A673 (cell line): ENCODE measurements at regions of chr12 and their contacts with region 1.

Region 1: DNA sequence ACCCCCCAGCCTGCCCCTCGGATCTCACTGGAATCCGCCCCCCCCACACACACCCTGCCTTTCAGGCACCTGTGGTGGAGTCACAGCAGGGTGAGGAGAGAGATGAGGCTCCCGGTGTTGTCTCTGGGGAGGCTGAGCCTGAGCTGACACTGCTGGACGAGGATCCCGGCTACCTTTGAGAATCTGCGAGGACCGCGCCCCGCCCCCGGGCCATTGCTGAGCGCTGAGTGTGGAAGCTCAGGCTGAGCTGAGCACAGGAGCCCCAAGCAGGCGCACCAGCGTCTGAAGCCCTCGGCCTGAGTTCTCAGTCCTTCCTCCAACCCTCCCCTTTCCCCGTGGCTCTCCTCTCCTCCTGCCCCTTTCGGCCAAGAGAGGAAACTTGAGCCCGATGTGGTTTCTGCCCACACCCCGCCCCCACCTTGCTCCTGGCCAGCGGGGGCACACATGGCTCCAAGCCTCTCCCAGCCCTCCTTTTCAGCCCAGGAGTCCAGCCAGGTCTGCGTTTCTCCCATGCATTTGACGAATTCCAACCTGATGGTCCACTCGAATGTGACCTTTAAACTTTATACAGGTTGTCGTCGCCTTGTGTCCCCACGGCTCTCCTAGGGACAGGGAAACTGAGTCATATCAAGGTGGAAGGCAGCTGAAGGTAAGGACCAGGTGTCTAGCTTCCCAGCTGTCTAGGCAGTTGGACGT is at the start of gene NFE2:
- DNase-seq: no peak
- H3K4me3 ChIP-seq: no peak within 1 kb of the TSS
- H3K27ac ChIP-seq: no peak within 1 kb of the TSS
- H3K4me1 ChIP-seq: no peaks in the 10 kb centered on the region
- H3K27me3 ChIP-seq: peaks cover 6% of the 10 kb centered on the region
- CTCF ChIP-seq: no peak
- total RNA-seq, gene NFE2: not detected in 2 replicates

Region 2: DNA sequence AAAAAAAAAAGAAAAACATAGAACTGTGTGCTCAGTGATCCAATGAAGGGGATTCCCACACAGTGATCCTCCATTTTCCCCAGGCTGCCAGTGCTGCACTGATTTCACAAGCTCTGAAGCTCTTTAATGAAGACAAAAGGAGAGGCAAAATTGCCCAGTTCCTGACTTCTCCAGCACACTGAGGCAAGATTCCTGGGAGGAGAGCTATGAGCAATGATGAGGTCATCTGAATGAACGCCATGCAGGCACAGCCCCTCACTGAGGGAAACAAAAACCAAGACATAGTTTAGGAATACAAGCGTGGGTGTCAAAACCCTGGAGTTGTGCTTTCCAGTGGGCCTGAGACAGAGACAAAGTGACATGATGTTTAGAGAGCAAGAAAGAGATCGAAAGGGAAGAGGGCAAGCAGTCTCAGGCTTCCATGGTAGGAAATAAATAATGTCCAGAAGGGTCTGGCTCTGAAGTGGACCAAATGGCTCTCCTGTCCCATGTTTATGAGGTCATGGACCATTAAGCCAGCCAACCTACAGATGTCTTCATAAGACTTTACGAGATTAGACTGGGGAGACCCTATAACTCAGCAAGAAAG is 71.2 kb before region 1 on chr12:
- CTCF ChIA-PET with region 1: interaction called, 7 read pairs
- POLR2A ChIA-PET with region 1: interaction called, 11 read pairs
- intact Hi-C with region 1: no loop called
- DNase-seq: peak; percentile 80
- H3K4me3 ChIP-seq: no peak overlapping the region
- H3K27ac ChIP-seq: peak overlapping the region; percentile 15
- H3K4me1 ChIP-seq: peaks cover 4% of the 10 kb centered on the region
- H3K27me3 ChIP-seq: no peaks in the 10 kb centered on the region
- CTCF ChIP-seq: no peak

Region 3: DNA sequence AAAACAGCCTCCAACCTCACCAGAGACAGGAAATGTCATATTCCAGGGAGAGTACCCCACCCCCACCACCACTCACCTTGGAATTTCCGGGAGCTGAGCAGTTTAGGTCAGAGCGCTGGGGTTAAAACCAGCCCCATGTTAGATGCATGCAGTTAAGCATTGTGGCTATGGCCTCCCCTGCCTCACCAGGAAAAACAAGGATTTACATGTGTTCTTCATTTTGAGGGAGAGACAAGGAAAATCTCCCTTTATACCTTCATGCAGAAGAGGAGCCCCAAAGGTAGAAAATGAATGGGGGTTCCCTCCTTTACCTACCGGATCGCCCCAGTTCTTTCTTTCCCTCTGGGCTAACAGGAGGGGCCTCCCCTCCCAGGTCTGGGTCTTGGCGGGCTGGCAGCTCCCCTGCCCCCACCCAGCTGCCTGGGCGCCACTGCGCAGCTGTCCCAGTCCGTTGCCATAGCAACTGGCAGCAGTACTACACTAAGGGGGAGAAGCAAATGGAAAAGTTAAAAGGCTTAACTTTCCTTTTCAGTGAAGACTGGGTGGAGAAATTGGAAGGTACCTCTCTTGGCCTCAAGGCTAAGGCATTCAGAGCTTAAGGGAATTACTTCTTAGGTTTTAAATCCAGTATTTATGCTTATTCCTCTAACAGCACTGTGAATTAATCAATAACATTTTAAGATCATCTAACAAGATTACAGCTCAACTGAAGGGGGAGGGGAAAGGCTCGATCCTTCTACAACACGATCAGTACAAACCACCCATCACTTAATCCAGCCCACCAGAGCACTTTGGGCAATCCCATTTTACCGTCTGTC is 41.5 kb before region 1 on chr12:
- CTCF ChIA-PET with region 1: no interaction called
- POLR2A ChIA-PET with region 1: interaction called, 25 read pairs
- intact Hi-C with region 1: no loop called
- DNase-seq: peak; percentile 97
- H3K4me3 ChIP-seq: peak overlapping the region; percentile 50
- H3K27ac ChIP-seq: peak overlapping the region; percentile 87
- H3K4me1 ChIP-seq: peaks cover 59% of the 10 kb centered on the region
- H3K27me3 ChIP-seq: no peaks in the 10 kb centered on the region
- CTCF ChIP-seq: no peak

Region 4: DNA sequence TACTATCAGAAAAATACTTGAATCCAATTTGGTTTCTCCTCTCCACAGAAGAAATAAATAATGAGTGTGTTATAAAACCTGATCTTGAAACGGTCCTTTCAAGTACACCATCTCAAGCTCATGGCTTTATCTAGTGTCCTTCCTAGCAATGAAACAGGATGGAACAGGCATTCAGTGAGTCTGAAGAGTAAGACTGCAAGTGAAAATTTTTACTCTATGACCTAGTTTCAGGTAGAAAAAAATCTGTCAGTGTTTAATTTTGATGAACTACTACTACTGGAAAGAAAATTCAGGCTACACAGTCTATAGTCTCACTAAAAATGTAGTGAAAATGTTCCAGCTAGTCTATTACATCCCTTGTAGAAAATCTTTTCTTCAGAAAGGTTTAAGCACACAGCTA is 28.7 kb before region 1 on chr12:
- CTCF ChIA-PET with region 1: interaction called, 15 read pairs
- POLR2A ChIA-PET with region 1: no interaction called
- intact Hi-C with region 1: no loop called
- DNase-seq: no peak
- H3K4me3 ChIP-seq: no peak overlapping the region
- H3K27ac ChIP-seq: peak overlapping the region; percentile 10
- H3K4me1 ChIP-seq: peaks cover 15% of the 10 kb centered on the region
- H3K27me3 ChIP-seq: no peaks in the 10 kb centered on the region
- CTCF ChIP-seq: no peak

Region 5: DNA sequence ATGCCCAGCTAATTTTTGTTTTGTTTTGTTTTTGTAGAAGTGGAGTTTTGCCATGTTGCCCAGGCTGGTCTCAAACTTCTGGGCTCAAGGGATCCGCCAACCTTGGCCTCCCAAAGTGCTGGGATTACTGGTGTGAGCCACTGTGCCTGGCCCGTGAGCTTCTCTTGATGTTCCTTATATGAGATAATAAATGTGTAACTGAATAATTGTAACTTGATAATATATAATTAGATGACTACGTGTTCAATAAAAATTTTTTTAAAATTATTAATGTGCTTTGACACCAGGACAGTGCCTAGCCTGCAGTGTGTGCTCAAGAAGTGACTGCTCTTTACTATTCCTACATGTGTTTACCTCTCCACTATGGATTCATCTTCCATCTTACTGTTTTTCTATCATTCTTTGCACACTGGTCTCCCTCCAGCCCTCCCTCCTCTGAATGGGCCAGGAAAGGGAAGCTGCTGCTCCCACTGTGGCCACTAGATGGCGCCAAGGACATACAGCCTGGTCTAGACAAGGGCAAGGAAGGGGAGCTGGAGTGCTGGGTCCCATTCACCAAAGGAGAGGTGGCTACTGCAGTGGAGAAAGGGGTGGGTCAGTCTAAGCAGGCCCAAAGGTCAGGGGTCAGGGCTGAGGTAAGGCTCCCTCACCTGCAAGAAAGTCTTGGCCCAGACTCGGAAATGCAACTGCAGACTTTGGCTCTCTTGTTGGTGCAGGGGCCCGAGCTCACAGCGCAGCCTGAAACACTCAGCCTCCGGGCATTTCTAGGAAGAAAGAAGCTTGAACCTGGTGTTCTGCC is 98.3 kb after region 1 on chr12:
- CTCF ChIA-PET with region 1: no interaction called
- POLR2A ChIA-PET with region 1: no interaction called
- intact Hi-C with region 1: no loop called
- DNase-seq: peak; percentile 89
- H3K4me3 ChIP-seq: no peak overlapping the region
- H3K27ac ChIP-seq: peak overlapping the region; percentile 29
- H3K4me1 ChIP-seq: no peaks in the 10 kb centered on the region
- H3K27me3 ChIP-seq: no peaks in the 10 kb centered on the region
- CTCF ChIP-seq: peak; percentile 99

Region 6: GRCh38 chr12:54475537-54475936 is 174.7 kb after region 1 on chr12:
- CTCF ChIA-PET with region 1: interaction called, 10 read pairs
- POLR2A ChIA-PET with region 1: no interaction called
- intact Hi-C with region 1: no loop called
- DNase-seq: no peak
- H3K4me3 ChIP-seq: no peak overlapping the region
- H3K27ac ChIP-seq: no peak overlapping the region
- H3K4me1 ChIP-seq: peaks cover 9% of the 10 kb centered on the region
- H3K27me3 ChIP-seq: no peaks in the 10 kb centered on the region
- CTCF ChIP-seq: no peak

Region 7: GRCh38 chr12:54560374-54560858 is 259.5 kb after region 1 on chr12:
- CTCF ChIA-PET with region 1: no interaction called
- POLR2A ChIA-PET with region 1: no interaction called
- intact Hi-C with region 1: no loop called
- DNase-seq: peak; percentile 95
- H3K4me3 ChIP-seq: peak overlapping the region; percentile 37
- H3K27ac ChIP-seq: peak overlapping the region; percentile 68
- H3K4me1 ChIP-seq: peaks cover 20% of the 10 kb centered on the region
- H3K27me3 ChIP-seq: no peaks in the 10 kb centered on the region
- CTCF ChIP-seq: no peak